Psoas muscle (tissue), 8 donors: ENCODE measurements at regions of chr22 and their contacts with region 1.

Region 1: DNA sequence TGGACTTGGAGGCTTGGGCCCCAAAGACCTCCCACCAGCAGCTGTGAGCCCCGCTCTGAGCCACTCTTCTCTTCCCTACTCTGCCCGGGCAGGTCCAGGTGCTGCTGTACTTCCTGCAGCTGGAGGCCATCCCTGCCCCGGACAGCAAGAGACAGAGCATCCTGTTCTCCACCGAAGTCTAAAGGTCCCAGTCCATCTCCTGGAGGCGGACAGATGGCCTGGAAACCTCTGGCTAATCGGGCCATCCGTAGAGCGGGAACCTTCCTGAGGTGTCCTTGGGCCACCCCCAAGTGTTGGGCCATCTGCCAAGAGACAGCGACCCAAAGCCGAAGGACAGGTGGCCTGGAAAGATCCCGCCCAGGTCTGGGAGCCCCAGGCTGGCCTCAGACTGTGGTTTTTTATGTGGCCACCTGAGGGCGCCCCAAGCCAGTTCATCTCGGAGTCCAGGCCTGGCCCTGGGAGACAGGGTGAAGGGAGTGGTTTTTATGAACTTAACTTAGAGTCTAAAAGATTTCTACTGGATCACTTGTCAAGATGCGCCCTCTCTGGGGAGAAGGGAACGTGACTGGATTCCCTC is 135.1 kb downstream of the BCR start:
- DNase-seq: peak in 1 of 2 donors; percentile 73
- ATAC-seq: no peak
- H3K4me3 ChIP-seq: no peak overlapping the region
- H3K27ac ChIP-seq: no peak overlapping the region
- H3K4me1 ChIP-seq: no peaks in the 10 kb centered on the region
- H3K27me3 ChIP-seq: no peaks in the 10 kb centered on the region
- CTCF ChIP-seq: peak; percentile 76

Region 2: GRCh38 chr22:23385291-23386244 is 70.1 kb after region 1 on chr22:
- intact Hi-C with region 1: loop called in 1 of 2 experiments (anchors 1 kb)
- DNase-seq: peak; percentile 75 to 85
- ATAC-seq: peak; percentile 81 to 93 (median 89)
- H3K4me3 ChIP-seq: no peak overlapping the region
- H3K27ac ChIP-seq: no peak overlapping the region
- H3K4me1 ChIP-seq: no peaks in the 10 kb centered on the region
- H3K27me3 ChIP-seq: peaks cover 0 to 2% (median 0%) of the 10 kb centered on the region in 3 donors
- CTCF ChIP-seq: peak; percentile 98